Psoas muscle (tissue), 8 donors: ENCODE measurements at regions of chr4 and their contacts with region 1.

Region 1: GRCh38 chr4:52358883-52359321 is 300.2 kb downstream of the USP46 start:
- DNase-seq: no peak
- ATAC-seq: no peak
- H3K4me3 ChIP-seq: no peak overlapping the region
- H3K27ac ChIP-seq: no peak overlapping the region
- H3K4me1 ChIP-seq: no peaks in the 10 kb centered on the region
- H3K27me3 ChIP-seq: no peaks in the 10 kb centered on the region
- CTCF ChIP-seq: no peak

Region 2: GRCh38 chr4:52273885-52274284 is 85.0 kb before region 1 on chr4:
- intact Hi-C with region 1: no loop called
- DNase-seq: no peak
- ATAC-seq: no peak
- H3K4me3 ChIP-seq: no peak overlapping the region
- H3K27ac ChIP-seq: no peak overlapping the region
- H3K4me1 ChIP-seq: no peaks in the 10 kb centered on the region
- H3K27me3 ChIP-seq: no peaks in the 10 kb centered on the region
- CTCF ChIP-seq: no peak

Region 3: DNA sequence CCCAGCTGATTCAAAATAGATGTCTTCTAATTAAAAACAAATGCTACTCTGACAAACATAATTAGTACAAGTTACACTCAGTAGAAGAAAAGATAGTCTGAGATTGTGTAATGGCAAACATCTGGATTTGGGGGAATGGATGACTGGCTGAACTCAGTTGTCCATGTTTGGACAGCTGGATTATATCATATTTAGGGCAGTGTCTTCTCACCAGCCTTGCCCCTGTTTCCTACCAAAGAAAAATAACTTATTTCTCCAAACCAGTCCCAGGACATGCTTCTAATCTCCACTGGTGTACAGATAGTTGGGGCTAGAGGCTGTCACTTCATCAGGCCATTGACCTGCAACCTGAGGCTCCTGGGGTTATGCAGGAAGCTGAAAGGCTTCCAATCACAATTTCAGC is 62.9 kb after region 1 on chr4:
- intact Hi-C with region 1: loop called in 1 of 2 experiments (anchors 2 kb)
- DNase-seq: no peak
- ATAC-seq: no peak
- H3K4me3 ChIP-seq: no peak overlapping the region
- H3K27ac ChIP-seq: no peak overlapping the region
- H3K4me1 ChIP-seq: no peaks in the 10 kb centered on the region
- H3K27me3 ChIP-seq: no peaks in the 10 kb centered on the region
- CTCF ChIP-seq: no peak